Panc1 (cell line): ENCODE measurements at regions of chr4 and their contacts with region 1.

Region 1: DNA sequence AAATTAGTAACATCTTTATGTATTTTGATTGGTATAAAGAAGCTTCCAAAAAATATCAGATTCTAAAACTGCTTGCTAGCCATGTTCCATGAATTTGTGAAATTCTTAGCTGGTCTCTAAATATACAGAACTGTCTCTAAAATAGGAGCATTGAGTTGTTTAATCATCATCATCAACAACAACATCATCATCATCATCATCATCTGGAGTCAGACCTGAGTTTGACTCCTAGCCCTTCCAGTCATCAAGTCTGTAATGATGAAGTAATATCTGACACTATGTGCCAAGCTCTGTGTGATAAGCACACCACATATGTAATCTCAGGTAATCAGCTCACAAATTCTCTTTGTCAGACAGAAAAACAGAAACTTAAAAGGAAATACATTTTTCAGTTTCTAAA is 183.9 kb downstream of the TRAM1L1 start:
- DNase-seq: no peak
- ATAC-seq: no peak
- H3K4me3 ChIP-seq: no peak overlapping the region
- H3K27ac ChIP-seq: no peak overlapping the region
- H3K4me1 ChIP-seq: no peaks in the 10 kb centered on the region
- H3K27me3 ChIP-seq: no peaks in the 10 kb centered on the region
- CTCF ChIP-seq: no peak

Region 2: DNA sequence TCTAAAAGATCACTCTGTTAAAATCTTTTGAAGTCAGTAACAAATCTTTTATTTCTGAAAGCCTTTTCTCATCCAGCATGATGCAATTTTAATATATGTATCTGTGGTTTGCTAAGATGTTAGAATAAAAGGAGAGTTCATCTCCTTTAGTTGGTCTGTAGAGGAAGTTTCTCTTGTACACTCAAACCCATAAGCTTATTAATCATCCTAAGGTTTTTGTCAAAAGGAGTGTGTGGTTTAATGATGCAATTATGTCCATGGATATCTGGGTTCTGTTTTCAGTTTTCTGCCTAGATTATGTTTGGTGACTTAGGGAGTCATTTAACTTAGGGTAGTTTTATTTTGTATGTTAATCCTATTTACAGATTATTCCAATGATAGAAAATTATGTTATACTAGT is 1736.0 kb before region 1 on chr4:
- CTCF ChIA-PET with region 1: no interaction called
- POLR2A ChIA-PET with region 1: interaction called, 21 read pairs
- in situ Hi-C with region 1: no loop called
- intact Hi-C with region 1: no loop called
- DNase-seq: no peak
- ATAC-seq: no peak
- H3K4me3 ChIP-seq: no peak overlapping the region
- H3K27ac ChIP-seq: no peak overlapping the region
- H3K4me1 ChIP-seq: no peaks in the 10 kb centered on the region
- H3K27me3 ChIP-seq: no peaks in the 10 kb centered on the region
- CTCF ChIP-seq: no peak

Region 3: GRCh38 chr4:116829187-116829586 is 72.3 kb before region 1 on chr4:
- CTCF ChIA-PET with region 1: no interaction called
- POLR2A ChIA-PET with region 1: no interaction called
- in situ Hi-C with region 1: no loop called
- intact Hi-C with region 1: no loop called
- DNase-seq: no peak
- ATAC-seq: no peak
- H3K4me3 ChIP-seq: no peak overlapping the region
- H3K27ac ChIP-seq: no peak overlapping the region
- H3K4me1 ChIP-seq: no peaks in the 10 kb centered on the region
- H3K27me3 ChIP-seq: no peaks in the 10 kb centered on the region
- CTCF ChIP-seq: no peak

Region 4: DNA sequence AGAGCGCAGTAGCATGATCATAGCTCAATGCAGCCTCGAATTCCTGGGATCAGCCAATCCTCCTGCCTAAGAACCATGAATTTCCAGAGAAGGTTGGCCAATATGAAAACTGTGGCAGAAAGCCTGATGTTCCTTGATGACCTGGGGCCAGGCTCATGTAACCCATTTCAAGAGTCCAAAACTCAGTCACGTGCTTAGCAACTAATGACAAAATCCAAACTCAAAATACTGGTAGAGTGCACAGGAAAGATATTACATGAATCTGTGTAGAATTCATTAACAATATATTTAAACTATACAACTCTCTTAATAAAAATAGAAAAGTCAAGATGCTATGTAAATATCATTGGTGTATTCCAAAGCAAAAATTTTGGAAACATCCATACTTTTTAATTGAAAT is 867.1 kb after region 1 on chr4:
- CTCF ChIA-PET with region 1: no interaction called
- POLR2A ChIA-PET with region 1: no interaction called
- in situ Hi-C with region 1: no loop called
- intact Hi-C with region 1: no loop called
- DNase-seq: no peak
- ATAC-seq: no peak
- H3K4me3 ChIP-seq: no peak overlapping the region
- H3K27ac ChIP-seq: no peak overlapping the region
- H3K4me1 ChIP-seq: no peaks in the 10 kb centered on the region
- H3K27me3 ChIP-seq: no peaks in the 10 kb centered on the region
- CTCF ChIP-seq: no peak